A549 (cell line): ENCODE measurements at regions of chr9 and their contacts with region 1.

Region 1: DNA sequence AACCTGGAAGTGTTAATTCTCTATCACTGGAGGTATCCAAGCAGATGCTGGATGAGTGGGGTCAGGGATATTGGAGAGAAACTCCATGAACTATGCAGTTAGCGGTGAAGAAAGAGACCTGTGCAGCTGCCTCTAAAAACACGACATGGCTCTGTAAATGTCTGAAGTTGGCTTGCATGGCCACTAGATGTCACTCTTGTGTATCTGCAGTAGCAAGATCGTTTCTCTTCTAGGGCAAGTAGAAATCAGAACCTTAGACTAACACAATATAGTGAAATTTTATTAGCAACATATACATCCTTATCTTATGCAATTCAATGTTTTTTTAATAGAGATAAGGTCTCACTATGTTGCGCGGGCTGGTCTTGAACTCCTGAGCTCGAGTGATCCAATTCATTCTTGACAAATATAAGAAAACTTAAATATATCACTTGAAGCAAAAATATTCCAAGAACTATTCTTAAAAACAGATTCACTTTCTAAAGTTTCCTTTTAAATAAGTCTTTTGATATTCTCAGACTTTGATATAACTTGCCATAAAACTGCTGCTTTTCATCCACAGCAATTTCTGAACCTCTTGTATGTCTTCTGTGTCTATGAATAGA is 2.9 kb downstream of the OR2S2 start:
- DNase-seq: peak; percentile 42 to 81
- ATAC-seq: peak; percentile 87 to 93
- H3K4me3 ChIP-seq: no peak overlapping the region
- H3K27ac ChIP-seq: no peak overlapping the region
- H3K4me1 ChIP-seq: peaks cover 8% of the 10 kb centered on the region; the same call in 1 of the 3 replicates
- CTCF ChIP-seq: peak; percentile 91
- EP300 ChIP-seq: no peak
- POLR2A ChIP-seq: no peak
- RAD21 ChIP-seq: peak; percentile 77 to 87

Region 2: GRCh38 chr9:35859310-35859989 is 95.6 kb before region 1 on chr9:
- CTCF ChIA-PET with region 1: no interaction called
- POLR2A ChIA-PET with region 1: no interaction called
- DNase-seq: peak; percentile 29 to 42
- ATAC-seq: peak; percentile 66 to 74
- H3K4me3 ChIP-seq: no peak overlapping the region
- H3K27ac ChIP-seq: no peak overlapping the region
- H3K4me1 ChIP-seq: no peaks in the 10 kb centered on the region
- CTCF ChIP-seq: no peak
- EP300 ChIP-seq: no peak
- POLR2A ChIP-seq: no peak
- RAD21 ChIP-seq: no peak

Region 3: DNA sequence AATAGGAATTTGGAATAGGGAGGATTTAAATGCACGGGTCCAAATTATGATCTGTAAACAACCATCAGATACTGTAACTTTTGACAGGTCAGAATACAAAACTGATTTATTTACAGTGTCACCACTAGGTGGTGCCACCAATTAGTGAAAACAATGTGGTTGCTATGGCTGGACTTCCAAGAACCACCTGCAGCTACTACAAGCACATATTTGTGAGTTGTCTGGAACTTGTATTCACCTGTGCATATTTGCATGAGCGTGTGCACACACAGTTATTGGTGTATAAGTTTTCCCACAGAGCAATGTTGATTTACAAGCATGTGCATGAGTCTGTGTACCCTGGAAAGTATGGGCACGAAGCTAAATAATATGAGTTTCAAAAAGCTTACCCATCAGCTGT is 52.0 kb before region 1 on chr9:
- CTCF ChIA-PET with region 1: interaction called, 24 read pairs
- POLR2A ChIA-PET with region 1: no interaction called
- DNase-seq: peak; percentile 74 to 79
- ATAC-seq: peak in 1 of 2 experiments; percentile 17; a peak in 1 of 6 replicates
- H3K4me3 ChIP-seq: no peak overlapping the region
- H3K27ac ChIP-seq: peak overlapping the region in 1 of 2 experiments; percentile 25; a peak in 2 of 6 replicates
- H3K4me1 ChIP-seq: peaks cover 38% of the 10 kb centered on the region
- CTCF ChIP-seq: peak; percentile 88
- EP300 ChIP-seq: no peak
- POLR2A ChIP-seq: no peak
- RAD21 ChIP-seq: peak; percentile 85 to 86

Region 4: GRCh38 chr9:35910613-35911359 is 44.3 kb before region 1 on chr9:
- CTCF ChIA-PET with region 1: interaction called, 18 read pairs
- POLR2A ChIA-PET with region 1: no interaction called
- DNase-seq: peak; percentile 79 to 82
- ATAC-seq: peak in 1 of 2 experiments; percentile 22; a peak in 3 of 6 replicates
- H3K4me3 ChIP-seq: no peak overlapping the region
- H3K27ac ChIP-seq: peak overlapping the region; percentile 93 to 99
- H3K4me1 ChIP-seq: peaks cover 49% of the 10 kb centered on the region
- CTCF ChIP-seq: peak; percentile 80
- EP300 ChIP-seq: no peak
- POLR2A ChIP-seq: no peak
- RAD21 ChIP-seq: peak; percentile 86 to 87

Region 5: GRCh38 chr9:35972093-35972492 is 17.0 kb after region 1 on chr9:
- CTCF ChIA-PET with region 1: interaction called, 16 read pairs
- POLR2A ChIA-PET with region 1: no interaction called
- DNase-seq: no peak
- ATAC-seq: no peak
- H3K4me3 ChIP-seq: no peak overlapping the region
- H3K27ac ChIP-seq: no peak overlapping the region
- H3K4me1 ChIP-seq: no peaks in the 10 kb centered on the region
- CTCF ChIP-seq: no peak
- EP300 ChIP-seq: no peak
- POLR2A ChIP-seq: no peak
- RAD21 ChIP-seq: no peak

Region 6: DNA sequence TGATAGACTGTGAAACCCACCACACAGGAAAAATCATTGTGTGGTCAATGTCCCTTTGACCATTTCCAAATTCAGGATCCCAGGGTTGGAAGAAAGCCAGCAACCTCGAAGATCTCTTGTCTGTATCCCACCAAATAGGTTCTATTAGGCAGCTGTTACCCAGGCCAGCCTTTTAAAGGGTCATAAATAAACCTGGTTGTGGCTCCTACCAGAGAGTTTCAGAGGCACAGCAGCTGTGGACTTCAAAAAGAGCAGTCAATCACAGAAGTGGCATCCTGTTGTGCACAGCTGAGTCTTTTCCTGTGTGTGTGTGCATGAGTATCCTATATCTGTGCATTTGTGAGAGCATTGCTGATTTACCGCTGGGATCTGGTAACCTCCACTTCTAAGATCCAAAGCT is 26.7 kb after region 1 on chr9:
- CTCF ChIA-PET with region 1: interaction called, 16 read pairs
- POLR2A ChIA-PET with region 1: no interaction called
- DNase-seq: no peak
- ATAC-seq: no peak
- H3K4me3 ChIP-seq: no peak overlapping the region
- H3K27ac ChIP-seq: no peak overlapping the region
- H3K4me1 ChIP-seq: no peaks in the 10 kb centered on the region
- CTCF ChIP-seq: no peak
- EP300 ChIP-seq: no peak
- POLR2A ChIP-seq: no peak
- RAD21 ChIP-seq: no peak

Region 7: DNA sequence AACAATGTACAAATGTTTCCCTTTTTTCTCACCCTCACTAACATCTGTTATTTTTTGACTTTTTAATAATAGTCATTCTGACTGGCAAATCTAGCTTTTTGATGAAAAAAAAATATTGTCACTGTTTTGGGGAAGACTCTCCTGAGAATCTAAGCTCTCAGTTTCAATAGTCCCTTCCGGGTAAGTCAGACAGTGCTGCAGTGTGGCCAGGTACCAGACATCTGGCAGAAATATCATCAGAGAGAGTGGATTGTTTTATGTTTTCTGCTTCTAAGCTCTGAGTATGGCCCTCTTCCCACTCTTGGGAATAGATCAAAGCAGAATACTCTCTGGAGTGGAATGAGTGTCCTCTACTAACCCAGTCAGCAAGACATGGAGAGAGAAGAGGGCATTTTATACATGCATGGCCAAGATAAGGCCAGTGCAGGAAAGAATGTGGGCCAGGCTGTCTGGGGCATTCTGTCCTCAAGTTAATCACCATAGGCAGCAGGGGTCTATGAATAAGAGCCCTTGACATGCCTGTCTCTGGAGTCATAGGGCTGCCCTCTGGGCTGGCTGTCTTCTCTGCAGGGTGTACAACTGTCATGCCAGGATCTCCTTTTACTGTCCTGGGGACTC is 41.4 kb after region 1 on chr9:
- CTCF ChIA-PET with region 1: interaction called, 15 read pairs
- POLR2A ChIA-PET with region 1: no interaction called
- DNase-seq: peak in 1 of 2 experiments; percentile 10
- ATAC-seq: peak; percentile 64 to 71; a peak in 4 of 6 replicates
- H3K4me3 ChIP-seq: no peak overlapping the region
- H3K27ac ChIP-seq: no peak overlapping the region
- H3K4me1 ChIP-seq: no peaks in the 10 kb centered on the region
- CTCF ChIP-seq: no peak
- EP300 ChIP-seq: no peak
- POLR2A ChIP-seq: no peak
- RAD21 ChIP-seq: no peak

Region 8: DNA sequence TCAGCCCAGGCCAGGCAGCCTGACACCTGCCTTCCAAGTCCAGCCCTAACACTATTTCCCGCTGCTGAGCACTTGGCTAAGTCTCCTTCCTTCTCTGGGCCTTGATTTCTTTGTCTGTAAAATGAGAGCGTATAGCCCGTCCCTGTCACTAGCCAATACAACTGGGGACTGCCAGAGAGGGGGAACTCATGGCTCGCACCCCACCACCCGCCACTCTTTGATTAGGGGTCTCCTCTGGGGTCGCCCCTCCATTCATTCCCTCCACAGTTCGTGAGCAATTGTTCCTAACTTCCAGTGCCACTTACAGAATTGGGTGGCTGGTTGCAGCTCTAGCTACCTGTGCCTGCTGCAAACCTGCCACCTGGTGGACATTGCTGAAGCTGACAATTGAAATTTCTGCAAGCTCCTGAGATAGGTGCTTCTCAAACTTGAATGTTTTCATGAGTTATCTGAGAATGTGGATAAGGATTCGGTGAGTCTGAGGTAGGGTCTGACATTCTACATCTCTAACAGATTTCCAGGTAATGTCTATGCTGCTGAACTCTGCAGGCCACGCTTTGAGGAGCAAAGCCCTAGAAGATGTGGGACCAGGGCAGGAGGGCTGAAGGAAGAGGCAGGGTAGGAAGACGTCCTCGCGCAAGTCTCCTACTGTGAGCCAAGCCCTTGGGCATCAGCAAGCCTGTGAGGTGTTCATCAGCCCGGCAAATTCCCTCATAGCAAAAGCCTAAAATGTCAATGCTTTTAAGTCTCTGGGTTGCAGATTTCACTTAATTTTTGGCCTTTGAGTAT is 68.4 kb after region 1 on chr9:
- CTCF ChIA-PET with region 1: interaction called, 104 read pairs
- POLR2A ChIA-PET with region 1: no interaction called
- DNase-seq: peak; percentile 60 to 74
- ATAC-seq: peak; percentile 86 to 97
- H3K4me3 ChIP-seq: no peak overlapping the region
- H3K27ac ChIP-seq: no peak overlapping the region
- H3K4me1 ChIP-seq: no peaks in the 10 kb centered on the region
- CTCF ChIP-seq: peak; percentile 93
- EP300 ChIP-seq: no peak
- POLR2A ChIP-seq: no peak
- RAD21 ChIP-seq: peak; percentile 82 to 86